ENCODE measurements at regions of chr16 and their contacts with region 1.

Region 1: GRCh38 chr16:89167425-89167941 is 4.1 kb upstream of the CDH15 start:
- DNase-seq: peak; percentile 96

Region 2: GRCh38 chr16:88737298-88738150 is 430.0 kb before region 1 on chr16:
- intact Hi-C with region 1: loop called in 1 of 2 experiments (anchors 10 kb)
- DNase-seq: peak; percentile 92

Region 3: DNA sequence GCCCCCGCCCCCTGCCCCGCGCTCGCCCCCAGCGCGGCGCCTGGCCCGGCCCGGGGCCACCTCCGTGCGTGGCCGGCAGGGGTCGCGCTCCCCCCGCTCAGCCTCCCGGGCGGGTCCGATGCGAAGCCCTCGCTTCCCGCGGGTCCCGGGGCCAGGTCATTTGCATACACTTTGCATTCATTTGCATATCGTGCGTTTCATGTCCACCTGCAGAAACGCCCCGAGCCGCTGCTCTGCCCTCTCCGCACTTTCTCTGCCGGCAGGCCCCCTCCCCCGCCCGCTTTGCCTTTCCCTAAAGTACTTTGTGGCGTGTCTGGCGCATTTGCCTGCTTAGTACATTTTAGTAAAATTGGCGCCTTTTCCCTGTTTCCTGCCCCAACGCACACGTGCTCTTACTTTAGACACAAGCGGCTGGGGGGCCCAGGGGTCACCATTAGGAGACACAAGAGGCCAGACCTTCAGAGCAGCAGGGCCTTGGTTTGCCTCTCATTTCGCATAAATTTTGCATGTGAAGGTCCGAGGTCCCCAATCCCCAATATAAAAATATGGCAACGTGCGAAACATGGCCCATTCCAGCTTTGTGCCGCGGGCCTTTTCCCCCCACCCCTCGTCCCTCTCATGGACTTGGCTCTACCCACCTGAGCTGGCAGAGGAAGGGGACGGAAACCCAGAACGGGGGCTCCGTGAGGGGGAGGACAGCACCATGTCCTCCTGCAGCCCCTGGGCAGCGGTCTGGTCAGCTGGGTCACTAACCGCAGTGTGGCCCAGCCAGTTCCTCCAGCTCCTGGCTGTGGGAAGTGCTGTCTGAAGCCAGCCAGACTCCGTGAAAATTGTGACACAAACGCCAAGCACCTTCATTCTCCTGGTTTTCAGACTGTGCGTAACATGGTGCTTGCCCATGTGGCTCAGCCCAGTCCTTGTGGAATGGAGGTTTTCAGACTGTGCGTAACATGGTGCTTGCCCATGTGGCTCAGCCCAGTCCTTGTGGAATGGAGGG is 225.3 kb before region 1 on chr16:
- intact Hi-C with region 1: loop called in 1 of 2 experiments (anchors 10 kb)
- DNase-seq: no peak

Region 4: GRCh38 chr16:89217388-89218191 is 50.1 kb after region 1 on chr16 and contains the start of gene ZNF778:
- intact Hi-C with region 1: loop called in 1 of 2 experiments (anchors 1 kb)
- DNase-seq: peak; percentile 95
- total RNA-seq, gene ZNF778: 8.4 to 9.3 TPM

Region 5: GRCh38 chr16:89458551-89458950 is 291.1 kb after region 1 on chr16:
- intact Hi-C with region 1: no loop called
- DNase-seq: no peak

Region 6: DNA sequence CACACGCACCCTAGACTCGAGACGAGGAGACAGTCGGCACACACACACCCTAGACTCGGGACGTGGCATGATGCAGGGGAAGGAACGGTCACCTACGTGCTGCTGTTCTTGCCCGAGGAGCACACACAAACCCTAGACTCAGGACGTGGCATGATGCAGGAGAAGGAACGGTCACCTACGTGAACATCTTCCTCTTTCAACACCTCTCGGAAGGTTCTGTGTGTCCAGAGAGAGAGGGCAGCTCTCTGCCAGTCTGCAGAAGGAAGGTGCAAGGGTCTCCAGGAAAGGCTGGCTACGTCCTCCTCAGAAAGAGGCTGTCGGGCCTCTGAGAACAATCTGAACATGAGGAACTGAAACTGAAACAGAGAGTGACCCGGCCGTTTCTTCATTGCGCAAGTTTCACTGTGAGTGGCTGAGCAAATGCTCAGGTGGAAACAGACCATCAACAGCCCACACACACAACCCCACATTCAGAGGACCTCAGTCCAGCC is 597.3 kb after region 1 on chr16:
- intact Hi-C with region 1: no loop called
- DNase-seq: no peak

Measured in posterior vena cava (tissue), 2 donors.